A673 (cell line): ENCODE measurements at regions of chr19 and their contacts with region 1.

Region 1: DNA sequence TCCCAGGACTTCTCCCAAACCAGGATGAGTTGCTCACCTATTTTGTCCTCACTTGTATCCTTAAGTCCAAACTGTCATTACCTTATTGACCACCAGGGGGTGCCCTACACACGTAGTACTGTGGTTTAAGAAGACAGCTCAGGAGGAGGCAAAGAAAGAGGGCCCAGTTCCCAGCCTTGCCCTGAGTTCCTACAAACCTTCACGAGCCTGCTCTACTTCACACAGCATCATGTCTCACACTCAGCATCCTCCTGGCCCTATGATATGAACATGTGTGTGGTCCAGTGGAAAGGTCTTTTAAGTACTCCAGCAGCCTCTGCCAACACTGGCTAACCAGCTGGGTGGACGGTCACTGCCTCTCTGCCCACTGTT is 8.1 kb upstream of the ZNF784 start:
- DNase-seq: peak; percentile 94
- H3K4me3 ChIP-seq: no peak overlapping the region
- H3K27ac ChIP-seq: no peak overlapping the region
- H3K4me1 ChIP-seq: peaks cover 14% of the 10 kb centered on the region
- H3K27me3 ChIP-seq: no peaks in the 10 kb centered on the region
- CTCF ChIP-seq: peak; percentile 80

Region 2: GRCh38 chr19:55063493-55064118 is 568.8 kb before region 1 on chr19:
- CTCF ChIA-PET with region 1: interaction called, 10 read pairs
- POLR2A ChIA-PET with region 1: no interaction called
- intact Hi-C with region 1: no loop called
- DNase-seq: no peak
- H3K4me3 ChIP-seq: peak overlapping the region; percentile 97
- H3K27ac ChIP-seq: no peak overlapping the region
- H3K4me1 ChIP-seq: no peaks in the 10 kb centered on the region
- H3K27me3 ChIP-seq: peaks cover 27% of the 10 kb centered on the region
- CTCF ChIP-seq: no peak

Region 3: GRCh38 chr19:55141696-55142095 is 490.8 kb before region 1 on chr19:
- CTCF ChIA-PET with region 1: interaction called, 4 read pairs
- POLR2A ChIA-PET with region 1: no interaction called
- intact Hi-C with region 1: loop called (anchors 5 kb)
- DNase-seq: no peak
- H3K4me3 ChIP-seq: peak overlapping the region; percentile 10
- H3K27ac ChIP-seq: no peak overlapping the region
- H3K4me1 ChIP-seq: peaks cover 7% of the 10 kb centered on the region
- H3K27me3 ChIP-seq: no peaks in the 10 kb centered on the region
- CTCF ChIP-seq: no peak

Region 4: GRCh38 chr19:55461259-55461973 is 171.0 kb before region 1 on chr19 and contains the start of gene ISOC2:
- CTCF ChIA-PET with region 1: no interaction called
- POLR2A ChIA-PET with region 1: no interaction called
- intact Hi-C with region 1: no loop called
- DNase-seq: peak; percentile 100
- H3K4me3 ChIP-seq: peak within 1 kb of the TSS; percentile 78
- H3K27ac ChIP-seq: peak within 1 kb of the TSS; percentile 91
- H3K4me1 ChIP-seq: peaks cover 38% of the 10 kb centered on the region
- H3K27me3 ChIP-seq: no peaks in the 10 kb centered on the region
- CTCF ChIP-seq: no peak
- total RNA-seq, gene ISOC2: 33.2 and 40.6 TPM in 2 replicates

Region 5: DNA sequence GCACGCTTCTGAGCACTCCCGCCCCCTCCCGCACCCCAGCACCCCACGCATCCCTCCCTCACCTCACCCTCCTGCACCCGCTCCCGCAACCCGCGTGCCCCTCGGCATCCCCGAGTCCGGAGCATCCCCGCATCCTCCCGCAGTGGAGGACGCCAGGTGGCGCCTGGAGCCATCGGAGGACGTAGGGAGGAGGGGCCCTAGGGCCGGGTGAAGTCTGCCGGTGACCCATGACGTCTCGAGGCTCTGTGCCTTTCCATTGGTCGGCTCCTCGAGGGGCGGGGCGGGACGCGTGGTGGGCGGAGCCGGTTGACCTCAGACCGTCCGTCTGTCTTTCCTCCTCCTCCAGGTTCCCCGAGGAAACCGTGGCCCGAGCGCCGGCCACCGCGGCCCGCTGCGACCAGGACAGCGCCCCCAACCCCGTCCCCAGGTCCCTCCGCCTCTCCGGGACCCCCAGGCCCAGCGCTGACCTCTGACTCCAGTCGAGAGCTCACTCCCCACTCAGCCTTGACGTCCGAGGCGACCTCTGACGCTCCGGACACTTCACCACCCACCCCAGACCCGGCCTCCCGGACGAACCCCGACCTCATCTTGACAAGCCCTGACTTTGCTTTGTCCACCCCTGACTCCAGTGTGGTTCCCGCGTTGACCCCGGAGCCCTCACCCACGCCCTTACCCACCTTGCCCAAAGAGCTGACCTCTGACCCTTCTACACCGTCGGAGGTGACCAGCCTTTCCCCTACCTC is 115.4 kb before region 1 on chr19:
- CTCF ChIA-PET with region 1: interaction called, 11 read pairs
- POLR2A ChIA-PET with region 1: no interaction called
- intact Hi-C with region 1: loop called (anchors 2 kb)
- DNase-seq: peak; percentile 93
- H3K4me3 ChIP-seq: peak overlapping the region; percentile 48
- H3K27ac ChIP-seq: peak overlapping the region; percentile 75
- H3K4me1 ChIP-seq: no peaks in the 10 kb centered on the region
- H3K27me3 ChIP-seq: no peaks in the 10 kb centered on the region
- CTCF ChIP-seq: peak; percentile 93

Region 6: GRCh38 chr19:55526216-55527196 is 105.9 kb before region 1 on chr19:
- CTCF ChIA-PET with region 1: interaction called, 14 read pairs
- POLR2A ChIA-PET with region 1: no interaction called
- intact Hi-C with region 1: no loop called
- DNase-seq: peak; percentile 21
- H3K4me3 ChIP-seq: no peak overlapping the region
- H3K27ac ChIP-seq: no peak overlapping the region
- H3K4me1 ChIP-seq: no peaks in the 10 kb centered on the region
- H3K27me3 ChIP-seq: no peaks in the 10 kb centered on the region
- CTCF ChIP-seq: no peak

Region 7: DNA sequence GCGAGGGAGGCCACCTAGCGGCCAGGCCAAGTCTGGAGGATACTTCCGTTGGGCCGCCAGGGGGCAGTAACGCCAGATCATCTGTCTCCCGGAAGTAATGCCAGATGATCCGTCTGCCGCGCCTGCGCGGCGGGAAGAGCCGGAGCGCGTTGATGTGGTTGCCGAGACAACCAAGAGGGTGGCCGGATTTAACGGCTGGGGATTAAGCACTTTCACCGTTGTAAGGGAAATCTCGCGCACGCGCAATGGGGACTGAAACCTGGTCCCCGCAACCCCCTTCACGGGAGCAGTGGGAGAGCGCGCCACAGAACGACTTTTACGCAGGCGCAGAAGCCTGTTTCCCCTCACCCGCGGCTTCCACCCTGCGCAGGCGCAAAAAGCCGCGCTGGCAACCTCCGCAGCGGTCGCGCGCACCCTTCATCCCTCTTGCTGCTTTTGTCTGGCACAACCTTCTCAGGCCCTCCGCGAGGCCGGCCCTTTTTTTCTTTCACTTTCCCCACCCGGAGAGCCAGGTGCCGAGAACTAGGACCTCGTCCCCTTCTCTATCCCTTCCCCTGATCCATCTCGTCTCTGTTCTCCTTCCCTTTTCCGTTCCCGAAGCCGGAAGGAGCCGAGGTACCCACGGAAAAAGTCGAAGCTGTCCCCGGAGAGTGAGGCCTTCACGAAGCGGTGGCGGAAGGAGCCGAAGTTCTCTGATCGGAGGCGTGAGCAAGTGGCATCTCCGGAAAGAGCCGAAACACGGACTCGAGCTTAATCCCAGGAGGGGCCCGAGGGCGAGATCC is 21.5 kb after region 1 on chr19:
- CTCF ChIA-PET with region 1: interaction called, 21 read pairs
- POLR2A ChIA-PET with region 1: no interaction called
- intact Hi-C with region 1: no loop called
- DNase-seq: peak; percentile 100
- H3K4me3 ChIP-seq: peak overlapping the region; percentile 83
- H3K27ac ChIP-seq: peak overlapping the region; percentile 99
- H3K4me1 ChIP-seq: peaks cover 25% of the 10 kb centered on the region
- H3K27me3 ChIP-seq: no peaks in the 10 kb centered on the region
- CTCF ChIP-seq: peak; percentile 99

Region 8: GRCh38 chr19:55809381-55810058 is 177.1 kb after region 1 on chr19:
- CTCF ChIA-PET with region 1: interaction called, 9 read pairs
- POLR2A ChIA-PET with region 1: no interaction called
- intact Hi-C with region 1: loop called (anchors 2 kb)
- DNase-seq: peak; percentile 92
- H3K4me3 ChIP-seq: no peak overlapping the region
- H3K27ac ChIP-seq: no peak overlapping the region
- H3K4me1 ChIP-seq: no peaks in the 10 kb centered on the region
- H3K27me3 ChIP-seq: peaks cover 5% of the 10 kb centered on the region
- CTCF ChIP-seq: peak; percentile 75